ENCODE measurements at regions of chr5 and their contacts with region 1.

Region 1: DNA sequence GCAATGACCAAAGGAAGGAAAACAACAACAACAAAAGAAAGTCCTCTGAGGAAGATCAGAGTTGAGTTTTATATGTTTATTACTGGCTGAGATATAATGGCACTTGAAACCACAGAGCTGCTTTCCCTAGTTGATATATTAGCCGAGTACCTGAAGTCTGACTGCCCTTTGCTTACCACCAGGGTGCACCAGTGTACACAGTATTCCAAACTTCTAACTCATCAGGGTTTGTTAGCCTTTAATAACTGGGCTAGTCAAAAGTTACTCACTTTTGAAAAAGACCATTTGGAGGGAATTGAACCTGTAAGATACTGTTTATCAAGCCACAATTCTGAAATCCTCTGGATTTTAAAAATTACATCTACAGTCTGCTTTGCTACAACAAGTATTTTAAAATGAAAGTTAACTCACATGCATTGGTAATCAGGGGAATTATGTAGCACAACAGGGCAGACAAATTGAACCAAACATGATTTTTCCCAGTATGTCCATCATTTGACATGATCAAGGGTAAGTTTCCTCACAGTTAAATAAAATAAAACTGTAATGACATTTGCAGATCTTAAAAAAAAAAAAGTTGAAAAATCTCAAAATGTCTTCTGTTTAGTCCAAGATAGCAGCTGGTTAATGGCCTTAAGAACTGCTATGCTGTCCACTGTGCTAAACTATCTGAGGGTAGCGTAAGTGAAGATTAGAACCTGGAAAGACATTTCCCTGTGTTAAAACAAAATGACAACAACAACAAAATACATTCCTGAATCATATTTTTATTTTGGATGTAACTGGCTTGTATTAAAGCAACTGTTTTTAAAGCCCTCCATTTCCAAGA is 57.3 kb upstream of the C6 start:
- DNase-seq: peak; percentile 85
- ATAC-seq: peak; percentile 96
- H3K4me3 ChIP-seq: no peak overlapping the region
- H3K27ac ChIP-seq: no peak overlapping the region
- H3K4me1 ChIP-seq: peaks cover 4% of the 10 kb centered on the region; the same call in 1 of the 2 replicates
- H3K27me3 ChIP-seq: no peaks in the 10 kb centered on the region
- CTCF ChIP-seq: peak; percentile 97

Region 2: GRCh38 chr5:41305056-41305455 is 34.4 kb after region 1 on chr5:
- CTCF ChIA-PET with region 1: interaction called, 11 read pairs
- POLR2A ChIA-PET with region 1: no interaction called
- intact Hi-C with region 1: no loop called
- DNase-seq: no peak
- ATAC-seq: no peak
- H3K4me3 ChIP-seq: no peak overlapping the region
- H3K27ac ChIP-seq: no peak overlapping the region
- H3K4me1 ChIP-seq: no peaks in the 10 kb centered on the region
- H3K27me3 ChIP-seq: no peaks in the 10 kb centered on the region
- CTCF ChIP-seq: no peak

Region 3: DNA sequence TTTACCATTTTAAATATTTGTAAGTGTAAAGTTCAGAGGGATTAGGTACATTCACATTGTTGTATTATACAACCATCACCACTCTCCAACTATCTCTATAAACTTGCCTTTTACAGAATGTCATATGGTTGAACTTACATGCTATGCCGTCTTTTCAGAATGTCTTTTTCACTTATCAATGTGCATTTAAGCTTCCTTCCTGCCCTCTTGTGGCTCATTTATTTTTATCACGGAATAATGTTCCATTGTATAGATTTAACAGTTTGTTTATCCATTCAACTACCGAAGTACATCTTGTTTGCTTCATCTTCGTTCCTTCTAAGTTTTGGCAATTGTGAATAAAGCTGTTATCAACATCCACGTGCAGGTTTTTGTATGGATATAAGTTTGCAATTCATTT is 76.0 kb after region 1 on chr5:
- CTCF ChIA-PET with region 1: interaction called, 7 read pairs
- POLR2A ChIA-PET with region 1: no interaction called
- intact Hi-C with region 1: loop called (anchors 1 kb)
- DNase-seq: peak; percentile 66
- ATAC-seq: no peak; the same call in 1 of the 2 replicates
- H3K4me3 ChIP-seq: no peak overlapping the region
- H3K27ac ChIP-seq: no peak overlapping the region
- H3K4me1 ChIP-seq: peaks cover 6% of the 10 kb centered on the region; the same call in 1 of the 2 replicates
- H3K27me3 ChIP-seq: no peaks in the 10 kb centered on the region
- CTCF ChIP-seq: peak; percentile 67

Region 4: GRCh38 chr5:41414601-41415000 is 144.0 kb after region 1 on chr5:
- CTCF ChIA-PET with region 1: no interaction called
- POLR2A ChIA-PET with region 1: no interaction called
- intact Hi-C with region 1: loop called (anchors 5 kb)
- DNase-seq: peak; percentile 98
- ATAC-seq: peak; percentile 68
- H3K4me3 ChIP-seq: no peak overlapping the region
- H3K27ac ChIP-seq: peak overlapping the region; percentile 91
- H3K4me1 ChIP-seq: peaks cover 83% of the 10 kb centered on the region
- H3K27me3 ChIP-seq: no peaks in the 10 kb centered on the region
- CTCF ChIP-seq: no peak

Region 5: DNA sequence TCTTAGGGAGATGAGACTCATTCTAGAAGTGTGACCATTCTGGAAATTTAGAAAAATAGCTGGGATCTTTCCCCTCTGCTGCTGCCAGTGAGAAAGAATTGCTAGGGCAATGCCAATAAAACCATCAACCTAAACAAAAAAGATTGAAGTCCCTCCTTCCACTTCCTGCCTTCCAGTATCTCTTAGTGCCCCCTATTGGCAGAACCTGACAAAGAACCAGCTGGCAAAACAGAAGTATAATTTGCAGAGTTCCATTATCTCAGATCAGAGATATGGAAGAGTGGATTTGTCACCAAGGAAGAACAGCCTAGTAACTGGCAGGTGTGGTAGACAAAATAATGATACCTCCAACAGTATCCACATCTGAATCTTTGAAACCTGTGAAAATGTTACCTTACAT is 253.5 kb after region 1 on chr5:
- CTCF ChIA-PET with region 1: interaction called, 3 read pairs
- POLR2A ChIA-PET with region 1: no interaction called
- intact Hi-C with region 1: loop called (anchors 1 kb)
- DNase-seq: peak; percentile 43
- ATAC-seq: no peak
- H3K4me3 ChIP-seq: no peak overlapping the region
- H3K27ac ChIP-seq: no peak overlapping the region
- H3K4me1 ChIP-seq: peaks cover 21% of the 10 kb centered on the region
- H3K27me3 ChIP-seq: no peaks in the 10 kb centered on the region
- CTCF ChIP-seq: peak; percentile 58

Region 6: DNA sequence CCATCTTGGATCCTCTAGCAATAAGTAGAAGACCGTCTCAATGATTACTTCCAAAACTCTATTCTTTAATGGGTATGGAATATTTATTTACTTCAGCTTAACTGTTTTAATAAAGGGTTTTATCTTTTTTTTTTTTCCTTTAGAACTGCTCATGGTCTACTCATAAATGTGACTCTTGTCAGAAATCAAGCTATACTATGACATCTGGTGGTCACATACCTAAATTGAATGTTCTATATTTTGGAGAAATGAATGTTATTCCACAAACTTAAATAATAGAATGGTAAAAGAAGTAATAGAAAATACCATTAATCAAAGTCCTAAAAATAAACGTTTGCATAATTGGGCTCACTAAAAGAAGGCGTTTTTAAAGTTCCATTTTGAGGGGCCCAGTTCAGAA is 371.0 kb after region 1 on chr5:
- CTCF ChIA-PET with region 1: interaction called, 4 read pairs
- POLR2A ChIA-PET with region 1: no interaction called
- intact Hi-C with region 1: loop called (anchors 1 kb)
- DNase-seq: peak; percentile 52
- ATAC-seq: no peak
- H3K4me3 ChIP-seq: no peak overlapping the region
- H3K27ac ChIP-seq: no peak overlapping the region
- H3K4me1 ChIP-seq: no peaks in the 10 kb centered on the region
- H3K27me3 ChIP-seq: no peaks in the 10 kb centered on the region
- CTCF ChIP-seq: peak; percentile 82

Region 7: GRCh38 chr5:41843456-41844370 is 573.1 kb after region 1 on chr5:
- CTCF ChIA-PET with region 1: no interaction called
- POLR2A ChIA-PET with region 1: no interaction called
- intact Hi-C with region 1: loop called (anchors 5 kb)
- DNase-seq: peak; percentile 71
- ATAC-seq: peak; percentile 62
- H3K4me3 ChIP-seq: no peak overlapping the region
- H3K27ac ChIP-seq: no peak overlapping the region
- H3K4me1 ChIP-seq: no peaks in the 10 kb centered on the region
- H3K27me3 ChIP-seq: no peaks in the 10 kb centered on the region
- CTCF ChIP-seq: peak; percentile 97

Measured in PC-3 (cell line).